ENCODE measurements at regions of chr11 and their contacts with region 1.

Region 1: DNA sequence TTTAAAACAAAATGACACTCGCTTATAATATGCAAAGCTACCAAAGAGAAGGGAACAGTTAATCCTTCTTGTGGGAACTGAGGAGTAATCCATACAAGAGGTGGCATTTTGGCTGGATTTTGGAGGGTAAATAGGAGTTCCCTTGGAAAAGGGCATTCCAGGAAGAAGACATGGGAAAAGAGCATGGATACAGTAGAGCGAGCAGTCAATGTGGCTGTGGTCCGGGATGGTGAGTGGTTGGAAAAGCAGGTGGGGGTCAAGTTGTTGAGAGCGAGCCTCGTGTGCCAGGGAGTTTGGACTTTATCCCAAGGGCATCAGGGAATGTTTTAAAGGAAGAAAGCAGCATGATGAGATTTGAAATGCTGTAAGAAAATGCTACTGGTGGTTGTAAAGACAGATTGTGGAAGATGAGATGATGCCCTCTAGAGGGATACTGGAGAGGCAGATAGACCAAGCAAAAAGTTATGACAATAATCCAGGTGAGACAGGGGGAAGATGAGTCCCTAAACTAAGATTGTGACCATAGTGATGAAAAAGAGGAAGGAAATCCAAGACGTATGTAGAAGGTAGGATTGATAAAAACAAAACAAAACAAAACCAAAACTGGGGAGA is 3.8 kb upstream of the MMP7 start:
- DNase-seq: peak; percentile 29
- CTCF ChIP-seq: peak; percentile 16

Region 2: DNA sequence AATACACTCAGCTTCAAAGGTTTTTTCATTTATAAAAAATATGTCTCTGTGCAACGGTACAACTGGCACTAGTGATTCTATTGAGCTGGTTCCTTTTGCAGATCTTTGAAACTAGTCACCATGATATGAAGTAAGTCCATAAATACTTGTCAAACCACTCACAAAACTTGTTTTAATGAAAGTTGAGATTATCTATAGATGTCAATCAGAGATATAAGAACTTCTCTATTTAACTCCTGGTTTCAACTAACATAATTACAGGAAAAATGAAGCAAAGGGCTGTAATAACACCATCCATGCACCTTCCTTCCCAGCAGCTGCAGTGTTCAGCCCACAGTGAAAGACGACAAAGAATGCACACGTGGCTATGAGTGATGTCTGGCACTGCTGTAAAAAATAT is 126.5 kb before region 1 on chr11:
- CTCF ChIA-PET with region 1: no interaction called
- POLR2A ChIA-PET with region 1: no interaction called
- DNase-seq: no peak
- CTCF ChIP-seq: no peak

Region 3: GRCh38 chr11:102522312-102523188 is 11.8 kb before region 1 on chr11:
- CTCF ChIA-PET with region 1: interaction called, 47 read pairs
- POLR2A ChIA-PET with region 1: no interaction called
- DNase-seq: no peak
- CTCF ChIP-seq: no peak

Measured in GM10248 (cell line).